HEK293T (cell line): ENCODE measurements at regions of chr16 and their contacts with region 1.

Region 1: GRCh38 chr16:3282730-3283524 is at the start of gene ZNF263:
- DNase-seq: peak; percentile 92

Region 2: GRCh38 chr16:3188925-3189825 is 93.8 kb before region 1 on chr16:
- CTCF ChIA-PET with region 1: no interaction called
- POLR2A ChIA-PET with region 1: interaction called, 18 read pairs
- DNase-seq: peak; percentile 50

Region 3: GRCh38 chr16:3264137-3265036 is 18.5 kb before region 1 on chr16:
- CTCF ChIA-PET with region 1: interaction called, 3 read pairs
- POLR2A ChIA-PET with region 1: interaction called, 30 read pairs
- DNase-seq: peak; percentile 96

Region 4: GRCh38 chr16:3400779-3401688 is 118.1 kb after region 1 on chr16 and contains the starts of genes ZNF174 and ZSCAN32:
- CTCF ChIA-PET with region 1: no interaction called
- POLR2A ChIA-PET with region 1: interaction called, 13 read pairs
- DNase-seq: peak; percentile 100